ENCODE measurements at regions of chr2 and their contacts with region 1.

Region 1: DNA sequence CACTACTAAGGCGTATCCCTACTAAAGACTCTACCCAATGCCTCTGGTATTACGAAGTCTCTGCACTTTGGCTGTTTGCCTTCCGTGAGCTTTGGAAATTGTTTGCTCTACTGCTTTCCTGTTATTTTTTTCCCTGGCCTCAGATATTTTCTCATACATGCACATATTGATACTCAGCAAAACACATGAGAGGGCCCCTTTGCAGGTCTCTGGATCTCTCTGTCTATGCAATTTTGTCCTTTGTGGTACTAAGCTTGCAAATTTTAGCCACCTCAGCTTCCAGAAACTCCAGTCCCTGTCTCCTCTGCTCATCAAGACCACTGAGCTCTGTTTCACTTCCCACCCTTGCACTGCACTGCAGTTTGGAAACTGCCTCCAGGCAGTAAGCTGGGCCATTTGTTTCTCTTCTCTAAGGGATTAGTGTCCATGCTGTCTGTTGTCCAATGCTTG is 46.6 kb downstream of the TAF1B start:
- DNase-seq: no peak

Region 2: DNA sequence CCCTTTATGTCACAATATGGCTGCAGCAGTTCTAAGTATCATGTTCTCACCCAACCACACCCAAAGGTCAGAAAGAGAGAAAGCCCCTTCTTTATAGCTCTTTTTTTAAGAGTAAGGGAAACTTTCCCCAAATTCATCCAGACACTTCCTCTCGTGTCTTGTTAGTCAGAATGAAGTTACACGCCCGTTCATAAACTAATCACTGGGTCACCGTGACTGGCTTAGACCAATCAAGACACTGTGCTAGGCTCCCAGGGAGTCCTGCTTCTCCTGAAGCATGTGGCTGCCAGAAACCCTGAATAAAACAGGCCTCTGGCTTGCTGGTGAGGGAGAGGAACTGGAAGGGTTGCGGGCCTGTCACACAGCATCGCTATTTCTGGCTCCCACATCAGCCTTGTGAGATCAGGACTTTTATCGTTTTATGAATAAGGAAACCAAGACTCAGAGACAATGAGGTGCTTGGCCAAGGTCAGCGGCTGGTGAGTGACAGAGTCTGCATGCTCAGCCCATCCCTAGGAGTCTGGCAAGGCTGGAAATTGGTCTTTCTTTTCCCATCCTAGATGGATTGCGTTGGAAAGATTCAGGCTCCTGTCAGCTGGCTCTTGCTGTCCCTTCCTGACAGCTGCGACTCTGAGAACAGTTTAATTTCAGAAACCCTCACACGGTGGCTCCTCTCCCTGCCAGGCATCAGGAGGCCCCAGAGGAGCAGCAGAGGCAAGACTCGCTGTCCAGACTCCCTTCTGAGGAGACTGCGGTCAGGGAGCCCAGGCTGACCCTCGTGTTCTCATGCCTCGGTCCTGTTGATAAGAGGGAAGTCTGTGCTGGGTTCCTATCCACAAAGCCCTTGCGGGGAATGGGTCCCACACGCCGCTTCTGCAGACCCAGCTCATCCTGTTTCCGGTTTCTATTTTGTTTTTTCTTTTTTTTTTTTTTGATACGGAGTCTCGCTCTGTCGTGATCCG is 151.0 kb before region 1 on chr2:
- intact Hi-C with region 1: no loop called
- DNase-seq: peak; percentile 84

Region 3: DNA sequence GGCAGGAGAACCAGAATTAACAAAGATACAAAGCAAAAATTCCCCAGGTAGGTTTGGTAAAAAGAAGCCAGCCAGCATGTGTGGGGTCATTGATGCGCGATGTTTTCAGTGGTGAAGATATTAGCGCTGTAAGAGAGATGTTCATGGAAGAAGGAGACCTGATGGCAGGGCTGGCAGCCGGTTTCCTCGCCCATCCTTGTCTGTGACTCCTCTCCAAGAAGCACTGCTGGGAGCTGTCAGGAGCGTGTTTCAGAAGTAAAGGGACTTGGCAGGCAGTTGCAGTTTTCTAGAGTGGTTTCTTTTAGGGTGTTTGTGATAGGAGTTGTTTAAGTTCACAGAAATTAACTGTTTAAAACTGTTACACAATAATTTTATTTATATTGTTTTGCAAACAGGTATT is 22.0 kb before region 1 on chr2:
- intact Hi-C with region 1: no loop called
- DNase-seq: no peak

Region 4: GRCh38 chr2:9909106-9909505 is 19.3 kb after region 1 on chr2:
- intact Hi-C with region 1: loop called in 1 of 2 experiments (anchors 2 kb)
- DNase-seq: no peak

Region 5: DNA sequence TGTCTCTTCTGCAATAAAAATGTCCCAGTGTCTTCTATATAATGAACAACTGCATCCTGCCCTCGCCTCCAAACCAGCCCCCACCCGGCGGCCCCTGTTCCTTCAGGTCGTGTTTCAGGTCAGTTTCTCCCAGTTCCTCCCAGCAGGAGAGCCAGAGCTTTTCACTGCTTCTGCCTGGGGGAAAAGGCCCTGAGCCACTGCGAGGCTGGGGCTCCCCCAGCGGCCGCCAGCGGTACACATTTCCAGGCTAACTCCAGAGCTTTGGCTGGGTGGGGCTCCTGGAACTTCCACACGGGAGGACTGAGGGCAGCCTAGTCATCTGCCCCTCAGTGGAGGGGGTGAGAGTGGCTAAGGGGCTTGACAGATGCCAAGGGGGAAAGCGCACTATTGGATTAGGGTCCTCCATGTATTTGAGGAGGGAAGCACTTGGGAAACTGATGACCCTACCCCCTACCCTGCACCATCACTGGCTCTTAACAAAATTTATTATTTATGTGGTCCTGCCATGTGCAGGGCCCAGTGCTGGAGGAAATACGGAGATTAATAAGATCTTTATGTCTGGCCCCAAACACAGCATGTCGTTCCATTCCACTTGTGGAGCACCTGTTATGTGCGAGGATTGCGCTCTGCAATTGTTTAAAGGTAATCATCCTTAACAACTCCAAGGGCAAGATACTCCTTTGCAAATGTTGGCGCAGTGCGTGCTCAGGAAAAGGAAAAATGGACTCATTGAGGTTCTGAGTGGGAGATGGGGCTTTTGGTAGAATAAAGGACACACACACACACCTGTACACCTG is 207.7 kb after region 1 on chr2:
- intact Hi-C with region 1: loop called in 1 of 2 experiments (anchors 5 kb)
- DNase-seq: peak; percentile 92